Heart right ventricle (tissue), 16 donors: ENCODE measurements at regions of chr6 and their contacts with region 1.

Region 1: GRCh38 chr6:26156076-26156849 is 69.0 kb downstream of the HFE start:
- DNase-seq: peak; percentile 90
- ATAC-seq: peak; percentile 85 to 92 (median 88)
- H3K4me3 ChIP-seq: peak overlapping the region; percentile 52 to 97 (median 79)
- H3K27ac ChIP-seq: peak overlapping the region; percentile 81 to 98 (median 94)
- H3K4me1 ChIP-seq: peaks cover 4 to 31% (median 21%) of the 10 kb centered on the region in 9 donors
- H3K27me3 ChIP-seq: no peaks in the 10 kb centered on the region
- CTCF ChIP-seq: peak in 2 of 9 donors; percentile 8 to 15

Region 2: GRCh38 chr6:26103770-26104456 is 52.4 kb before region 1 on chr6:
- intact Hi-C with region 1: loop called in 1 of 10 experiments (anchors 10 kb)
- DNase-seq: peak; percentile 83 to 90
- ATAC-seq: peak; percentile 89 to 96 (median 95)
- H3K4me3 ChIP-seq: peak overlapping the region; percentile 22 to 75 (median 60)
- H3K27ac ChIP-seq: peak overlapping the region; percentile 37 to 91 (median 80)
- H3K4me1 ChIP-seq: peaks cover 0 to 20% (median 10%) of the 10 kb centered on the region in 9 donors
- H3K27me3 ChIP-seq: no peaks in the 10 kb centered on the region
- CTCF ChIP-seq: peak in 8 of 9 donors; percentile 13 to 57 (median 40)

Region 3: DNA sequence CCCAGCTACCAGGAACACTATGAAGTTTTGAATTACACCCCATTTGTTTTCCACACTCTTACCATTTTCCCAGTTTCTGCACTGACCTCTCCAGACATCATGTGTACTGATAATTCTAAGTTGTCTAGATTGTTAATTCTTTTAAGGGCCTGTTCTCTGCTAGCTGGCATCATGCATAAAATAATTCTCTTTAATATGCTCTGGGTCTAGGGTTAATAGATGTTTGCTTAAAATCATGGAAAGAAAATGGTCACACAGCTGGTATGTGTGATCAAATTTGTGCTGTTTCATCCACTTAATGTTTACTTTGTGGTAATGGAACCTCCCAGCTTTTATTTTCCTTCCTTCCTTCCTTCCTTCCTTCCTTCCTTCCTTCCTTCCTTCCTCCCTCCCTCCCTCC is 19.9 kb before region 1 on chr6:
- intact Hi-C with region 1: no loop called
- DNase-seq: no peak
- ATAC-seq: no peak
- H3K4me3 ChIP-seq: no peak overlapping the region
- H3K27ac ChIP-seq: no peak overlapping the region
- H3K4me1 ChIP-seq: peaks cover 0 to 44% (median 5%) of the 10 kb centered on the region in 9 donors
- H3K27me3 ChIP-seq: no peaks in the 10 kb centered on the region
- CTCF ChIP-seq: no peak

Region 4: GRCh38 chr6:26196846-26197648 is 40.8 kb after region 1 on chr6:
- intact Hi-C with region 1: loop called in 3 of 10 experiments (anchors 5 kb)
- DNase-seq: peak; percentile 51 to 83
- ATAC-seq: peak; percentile 52 to 68 (median 62)
- H3K4me3 ChIP-seq: peak overlapping the region; percentile 37 to 75 (median 65)
- H3K27ac ChIP-seq: peak overlapping the region in 9 of 10 donors; percentile 57 to 90 (median 81)
- H3K4me1 ChIP-seq: peaks cover 0 to 52% (median 28%) of the 10 kb centered on the region in 9 donors
- H3K27me3 ChIP-seq: peaks cover 0 to 40% (median 0%) of the 10 kb centered on the region in 7 donors
- CTCF ChIP-seq: peak in 1 of 9 donors; percentile 0

Region 5: DNA sequence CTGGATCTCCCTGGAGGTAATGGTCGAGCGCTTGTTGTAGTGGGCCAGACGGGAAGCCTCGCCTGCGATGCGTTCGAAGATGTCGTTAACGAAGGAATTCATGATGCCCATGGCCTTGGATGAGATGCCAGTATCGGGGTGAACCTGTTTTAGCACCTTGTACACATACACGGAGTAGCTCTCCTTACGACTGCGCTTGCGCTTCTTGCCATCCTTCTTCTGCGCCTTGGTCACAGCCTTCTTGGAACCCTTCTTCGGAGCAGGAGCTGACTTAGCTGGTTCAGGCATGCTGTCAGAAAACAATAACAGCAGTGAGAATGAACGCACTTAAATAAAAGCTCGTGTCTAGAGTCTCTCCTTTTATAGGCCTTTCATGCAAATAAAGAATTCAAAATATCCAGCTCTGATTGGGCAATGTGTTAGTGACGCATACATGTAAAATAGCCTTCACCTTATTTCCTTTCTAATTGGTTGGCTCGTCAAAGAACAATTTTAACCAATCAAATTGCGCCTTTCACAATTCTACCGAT is 60.2 kb after region 1 on chr6:
- intact Hi-C with region 1: loop called in 1 of 10 experiments (anchors 5 kb)
- DNase-seq: peak in 1 of 2 donors; percentile 78
- ATAC-seq: peak; percentile 81 to 94 (median 90)
- H3K4me3 ChIP-seq: peak overlapping the region; percentile 27 to 66 (median 58)
- H3K27ac ChIP-seq: peak overlapping the region; percentile 80 to 94 (median 88)
- H3K4me1 ChIP-seq: peaks cover 0 to 31% (median 20%) of the 10 kb centered on the region in 9 donors
- H3K27me3 ChIP-seq: peaks cover 0 to 30% (median 11%) of the 10 kb centered on the region in 7 donors
- CTCF ChIP-seq: no peak